Dorsolateral prefrontal cortex (tissue), 120 donors: ENCODE measurements at regions of chr6 and their contacts with region 1.

Region 1: GRCh38 chr6:137707590-137708360 is 159.3 kb upstream of the TNFAIP3 start:
- DNase-seq: peak in 6 of 10 donors; percentile 8 to 50 (median 36)
- H3K4me3 ChIP-seq: peak overlapping the region in 17 of 59 donors; percentile 4 to 42 (median 24)
- H3K27ac ChIP-seq: peak overlapping the region in 1 of 59 donors; percentile 26
- H3K27me3 ChIP-seq: peaks cover 0 to 5% (median 0%) of the 10 kb centered on the region in 45 donors
- CTCF ChIP-seq: peak; percentile 53 to 94 (median 83)

Region 2: DNA sequence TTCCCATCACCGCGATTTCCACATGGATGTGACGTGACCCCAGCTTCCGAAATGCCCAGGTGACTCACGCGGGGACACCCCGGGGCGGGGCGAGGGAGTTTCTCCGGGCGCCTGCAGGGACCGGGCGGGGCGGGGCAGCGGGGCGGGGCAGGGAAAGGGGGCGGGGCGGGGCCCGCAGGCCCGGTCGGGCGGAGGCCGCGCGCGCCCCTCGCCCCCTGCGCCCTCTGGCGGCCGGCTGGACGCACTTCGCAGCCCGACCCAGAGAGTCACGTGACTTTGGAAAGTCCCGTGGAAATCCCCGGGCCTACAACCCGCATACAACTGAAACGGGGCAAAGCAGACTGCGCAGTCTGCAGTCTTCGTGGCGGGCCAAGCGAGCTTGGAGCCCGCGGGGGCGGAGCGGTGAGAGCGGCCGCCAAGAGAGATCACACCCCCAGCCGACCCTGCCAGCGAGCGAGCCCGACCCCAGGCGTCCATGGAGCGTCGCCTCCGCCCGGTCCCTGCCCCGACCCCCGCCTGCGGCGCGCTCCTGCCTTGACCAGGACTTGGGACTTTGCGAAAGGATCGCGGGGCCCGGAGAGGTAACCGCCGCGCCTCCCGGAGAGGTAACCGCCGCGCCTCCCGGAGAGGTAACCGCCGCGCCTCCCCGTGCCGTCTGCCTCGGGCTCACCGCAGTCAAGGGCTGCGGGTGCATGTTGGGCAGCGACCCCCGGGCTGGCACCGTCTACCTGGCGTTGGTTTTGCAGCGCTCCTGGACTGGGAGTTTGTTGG is 159.3 kb after region 1 on chr6 and contains the start of gene TNFAIP3:
- intact Hi-C with region 1: loop called (anchors 1 to 2 kb)
- DNase-seq: peak; percentile 40 to 86 (median 74)
- H3K4me3 ChIP-seq: peak within 1 kb of the TSS; percentile 58 to 95 (median 86)
- H3K27ac ChIP-seq: peak within 1 kb of the TSS in 51 of 59 donors; percentile 9 to 90 (median 73)
- H3K27me3 ChIP-seq: peaks cover 0 to 9% (median 0%) of the 10 kb centered on the region in 45 donors
- CTCF ChIP-seq: peak; percentile 29 to 96 (median 79)
- total RNA-seq, gene TNFAIP3: 1.6 to 33.7 (median 5.7) TPM

Region 3: GRCh38 chr6:137944793-137945498 is 237.2 kb after region 1 on chr6:
- intact Hi-C with region 1: loop called (anchors 1 to 2 kb)
- DNase-seq: no peak
- H3K4me3 ChIP-seq: no peak overlapping the region
- H3K27ac ChIP-seq: no peak overlapping the region
- H3K27me3 ChIP-seq: no peaks in the 10 kb centered on the region
- CTCF ChIP-seq: peak; percentile 29 to 86 (median 68)

Region 4: GRCh38 chr6:138001750-138002349 is 294.1 kb after region 1 on chr6:
- intact Hi-C with region 1: loop called in 1 of 2 experiments (anchors 5 kb)
- DNase-seq: peak in 7 of 10 donors; percentile 15 to 69 (median 44)
- H3K4me3 ChIP-seq: no peak overlapping the region
- H3K27ac ChIP-seq: no peak overlapping the region
- H3K27me3 ChIP-seq: peaks cover 0 to 5% (median 0%) of the 10 kb centered on the region in 45 donors
- CTCF ChIP-seq: peak; percentile 72 to 95 (median 88)

Region 5: GRCh38 chr6:138109042-138109997 is 401.5 kb after region 1 on chr6:
- intact Hi-C with region 1: loop called (anchors 5 kb)
- DNase-seq: peak in 9 of 10 donors; percentile 46 to 86 (median 69)
- H3K4me3 ChIP-seq: no peak overlapping the region
- H3K27ac ChIP-seq: no peak overlapping the region
- H3K27me3 ChIP-seq: peaks cover 0 to 27% (median 0%) of the 10 kb centered on the region in 45 donors
- CTCF ChIP-seq: peak; percentile 92 to 99 (median 97)